HCT116 (cell line): ENCODE measurements at regions of chr1 and their contacts with region 1.

Region 1: DNA sequence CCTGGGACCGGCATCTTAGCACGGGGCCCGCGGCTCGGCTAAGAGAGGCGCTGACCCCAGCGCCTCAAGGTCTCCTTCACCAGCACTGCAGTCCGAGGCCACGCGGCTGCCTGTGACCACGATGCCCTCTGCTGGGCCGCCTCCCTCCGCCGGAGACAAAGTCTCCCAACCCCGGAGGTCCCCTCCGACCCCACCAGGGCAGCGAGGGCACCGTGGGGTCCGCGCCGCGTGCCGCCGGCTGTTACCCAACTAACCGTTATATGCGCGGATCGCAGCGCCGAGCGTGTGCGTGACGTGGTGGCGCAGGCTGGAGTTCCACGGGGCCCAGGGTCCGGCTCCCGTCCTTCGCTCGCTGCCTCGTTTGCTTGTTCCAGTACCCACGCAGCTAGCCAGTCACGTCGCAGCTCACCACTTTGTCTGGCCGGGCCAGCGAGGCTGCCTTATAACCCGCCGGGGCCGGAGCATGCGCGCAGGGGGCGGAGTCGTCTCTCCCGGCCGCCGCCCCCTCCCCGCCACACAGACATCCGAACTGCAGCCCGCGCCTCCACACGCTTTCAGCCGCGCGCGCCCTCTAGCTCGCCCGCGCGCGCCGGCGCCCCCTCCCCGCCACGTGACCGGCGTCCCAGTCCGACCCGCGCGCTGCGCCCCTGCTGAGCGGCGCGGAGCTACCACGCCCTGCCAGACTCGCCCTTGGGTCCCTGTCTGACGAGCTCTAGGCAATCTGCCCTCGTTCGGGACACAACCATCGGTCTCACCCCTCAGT is at the start of gene SLC16A1:
- DNase-seq: peak; percentile 74
- ATAC-seq: peak; percentile 86
- H3K4me3 ChIP-seq: peak within 1 kb of the TSS; percentile 76 to 84
- H3K27ac ChIP-seq: peak within 1 kb of the TSS; percentile 87
- H3K4me1 ChIP-seq: peaks cover 8 to 32% of the 10 kb centered on the region in 2 experiments
- H3K27me3 ChIP-seq: no peaks in the 10 kb centered on the region
- CTCF ChIP-seq: no peak
- POLR2A ChIP-seq: peak; percentile 99
- RAD21 ChIP-seq: peak; percentile 45
- total RNA-seq, gene SLC16A1: 96.7 TPM

Region 2: DNA sequence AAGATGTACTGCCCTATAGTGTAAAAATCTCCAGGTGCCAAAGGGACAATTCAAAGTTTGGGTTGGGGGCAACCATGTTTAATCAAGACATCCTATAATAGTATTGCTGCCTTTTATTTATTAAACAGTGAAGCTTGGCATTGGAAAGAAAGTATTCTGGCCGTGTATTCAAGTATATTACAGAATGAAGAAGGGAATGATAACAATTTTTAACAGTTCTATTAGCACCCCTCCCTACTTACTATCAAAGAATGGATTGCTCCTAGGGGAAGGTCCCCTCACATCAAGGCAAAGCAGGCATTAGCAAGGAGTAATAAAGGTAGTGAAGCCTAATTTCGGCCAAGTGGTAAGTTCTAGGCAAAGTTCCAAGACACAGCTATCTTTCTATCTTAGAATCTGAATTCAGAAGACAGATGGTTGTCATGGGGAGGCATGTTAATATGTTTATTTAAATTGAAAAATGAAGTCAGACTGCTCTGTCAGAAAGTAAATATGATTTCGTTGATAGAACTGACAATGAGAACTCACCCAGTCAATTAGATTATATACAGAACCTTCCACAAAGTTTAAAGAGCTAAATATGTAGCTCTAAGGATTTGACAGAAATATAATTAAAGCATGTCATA is 361.6 kb before region 1 on chr1:
- CTCF ChIA-PET with region 1: no interaction called
- POLR2A ChIA-PET with region 1: no interaction called
- RAD21 ChIA-PET with region 1: no interaction called
- intact Hi-C with region 1: no loop called
- DNase-seq: no peak
- ATAC-seq: no peak
- H3K4me3 ChIP-seq: no peak overlapping the region
- H3K27ac ChIP-seq: no peak overlapping the region
- H3K4me1 ChIP-seq: no peaks in the 10 kb centered on the region
- H3K27me3 ChIP-seq: no peaks in the 10 kb centered on the region
- CTCF ChIP-seq: no peak
- POLR2A ChIP-seq: no peak
- RAD21 ChIP-seq: no peak

Region 3: DNA sequence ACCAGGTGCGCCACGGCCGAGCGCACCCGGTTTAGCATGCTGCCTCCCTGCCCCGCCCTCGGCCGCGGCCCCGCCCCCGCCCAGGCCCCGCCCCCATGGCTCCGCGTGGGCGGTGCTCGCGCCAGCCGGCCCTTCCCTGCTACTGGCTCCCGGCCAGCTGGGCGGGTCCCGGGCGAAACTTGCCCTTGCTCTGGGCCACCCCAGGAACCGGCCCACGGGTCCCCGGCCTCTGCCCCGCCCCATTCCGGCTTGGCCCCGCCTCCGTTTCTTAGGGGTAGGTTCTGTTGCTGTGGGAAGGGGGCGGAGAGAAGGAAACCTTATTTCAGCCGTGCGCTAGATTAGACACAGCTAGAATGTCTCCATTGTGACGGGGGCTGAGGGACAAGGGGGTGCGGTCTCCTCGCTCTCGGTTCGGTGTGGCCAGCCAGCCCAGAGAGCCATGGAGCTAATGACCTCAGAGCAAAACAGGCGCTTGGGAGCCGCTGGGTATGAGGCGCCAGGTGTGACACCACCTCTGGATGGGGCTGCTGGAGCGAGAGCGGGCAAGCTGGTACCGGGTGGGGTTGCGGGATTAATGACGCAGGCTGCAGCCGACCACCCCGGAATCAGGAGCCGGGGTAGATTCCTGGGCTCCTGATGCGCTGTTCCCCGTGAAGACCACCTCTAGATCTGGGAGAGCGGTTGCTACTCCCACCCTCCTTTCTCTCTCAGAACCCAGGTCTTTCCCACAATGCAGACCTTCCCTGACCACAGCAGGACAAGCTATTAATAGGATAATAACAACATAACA is 240.5 kb before region 1 on chr1 and contains the start of gene PPM1J:
- CTCF ChIA-PET with region 1: no interaction called
- POLR2A ChIA-PET with region 1: interaction called, 6 read pairs
- RAD21 ChIA-PET with region 1: no interaction called
- intact Hi-C with region 1: loop called (anchors 5 kb)
- DNase-seq: peak; percentile 89
- ATAC-seq: peak; percentile 82
- H3K4me3 ChIP-seq: peak within 1 kb of the TSS; percentile 58 to 75
- H3K27ac ChIP-seq: peak within 1 kb of the TSS; percentile 34; the same call in 1 of the 2 replicates
- H3K4me1 ChIP-seq: peaks cover 18 to 39% of the 10 kb centered on the region in 2 experiments
- H3K27me3 ChIP-seq: no peaks in the 10 kb centered on the region
- CTCF ChIP-seq: no peak
- POLR2A ChIP-seq: no peak
- RAD21 ChIP-seq: no peak
- total RNA-seq, gene PPM1J: 7.5 TPM

Region 4: GRCh38 chr1:112809253-112809684 is 146.7 kb before region 1 on chr1:
- CTCF ChIA-PET with region 1: interaction called, 3 read pairs
- POLR2A ChIA-PET with region 1: no interaction called
- RAD21 ChIA-PET with region 1: interaction called in 1 of 2 experiments, 3 read pairs
- intact Hi-C with region 1: loop called (anchors 5 kb)
- DNase-seq: peak; percentile 40
- ATAC-seq: peak; percentile 96
- H3K4me3 ChIP-seq: no peak overlapping the region
- H3K27ac ChIP-seq: no peak overlapping the region
- H3K4me1 ChIP-seq: peaks cover 0 to 4% of the 10 kb centered on the region in 2 experiments; a peak in 1 of 4 replicates
- H3K27me3 ChIP-seq: no peaks in the 10 kb centered on the region
- CTCF ChIP-seq: peak; percentile 89 to 97 (median 96)
- POLR2A ChIP-seq: no peak
- RAD21 ChIP-seq: peak; percentile 91

Region 5: DNA sequence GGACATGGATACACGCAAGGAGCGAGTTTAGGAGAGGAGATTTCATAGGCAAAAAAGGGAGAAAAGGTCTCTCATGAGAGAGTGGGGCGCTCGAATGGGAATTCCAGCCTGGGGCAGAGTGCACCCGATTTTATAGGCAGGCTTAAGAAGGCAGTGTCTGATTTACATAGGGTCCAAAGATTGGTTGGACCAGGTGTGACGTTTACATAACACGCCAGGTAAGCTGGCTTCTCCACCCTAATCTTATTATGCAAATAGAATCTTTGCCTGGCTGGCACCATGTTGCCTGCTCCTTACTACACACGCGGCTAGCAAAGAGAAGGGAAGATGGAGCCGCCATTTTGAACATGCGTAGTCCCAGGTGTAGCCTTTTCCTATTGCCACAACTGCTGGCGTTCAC is 103.7 kb before region 1 on chr1:
- CTCF ChIA-PET with region 1: no interaction called
- POLR2A ChIA-PET with region 1: no interaction called
- RAD21 ChIA-PET with region 1: no interaction called
- intact Hi-C with region 1: no loop called
- DNase-seq: no peak
- ATAC-seq: no peak
- H3K4me3 ChIP-seq: no peak overlapping the region
- H3K27ac ChIP-seq: no peak overlapping the region
- H3K4me1 ChIP-seq: peaks cover 0 to 6% of the 10 kb centered on the region in 2 experiments; a peak in 1 of 4 replicates
- H3K27me3 ChIP-seq: no peaks in the 10 kb centered on the region
- CTCF ChIP-seq: no peak
- POLR2A ChIP-seq: no peak
- RAD21 ChIP-seq: no peak

Region 6: DNA sequence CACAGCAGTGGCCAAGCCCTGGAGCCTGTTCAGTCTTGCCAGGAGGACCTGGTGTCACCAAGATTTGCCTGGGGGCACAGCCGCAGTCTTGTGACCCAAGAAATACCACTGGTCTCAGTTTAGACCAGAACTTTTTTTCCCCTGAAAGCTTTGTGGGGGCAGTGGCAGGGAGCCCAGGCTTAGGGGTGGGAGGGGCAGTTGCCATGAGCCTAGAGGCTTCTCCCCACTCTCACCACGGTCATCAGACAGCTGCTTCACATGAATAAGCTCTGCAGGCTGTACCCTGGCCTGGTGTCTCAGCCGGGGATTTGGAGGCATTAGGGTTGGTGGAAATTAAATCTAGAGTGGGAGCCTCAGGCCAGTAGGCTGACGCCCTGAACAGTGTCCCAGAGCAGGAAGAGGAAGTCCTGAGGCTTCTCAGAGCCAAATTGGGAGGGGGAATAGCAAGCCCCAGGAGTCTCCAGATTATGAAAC is 73.7 kb before region 1 on chr1:
- CTCF ChIA-PET with region 1: no interaction called
- POLR2A ChIA-PET with region 1: interaction called, 3 read pairs
- RAD21 ChIA-PET with region 1: no interaction called
- intact Hi-C with region 1: loop called (anchors 1 kb)
- DNase-seq: no peak
- ATAC-seq: no peak
- H3K4me3 ChIP-seq: no peak overlapping the region
- H3K27ac ChIP-seq: no peak overlapping the region
- H3K4me1 ChIP-seq: no peaks in the 10 kb centered on the region
- H3K27me3 ChIP-seq: no peaks in the 10 kb centered on the region
- CTCF ChIP-seq: no peak
- POLR2A ChIP-seq: no peak
- RAD21 ChIP-seq: no peak

Region 7: DNA sequence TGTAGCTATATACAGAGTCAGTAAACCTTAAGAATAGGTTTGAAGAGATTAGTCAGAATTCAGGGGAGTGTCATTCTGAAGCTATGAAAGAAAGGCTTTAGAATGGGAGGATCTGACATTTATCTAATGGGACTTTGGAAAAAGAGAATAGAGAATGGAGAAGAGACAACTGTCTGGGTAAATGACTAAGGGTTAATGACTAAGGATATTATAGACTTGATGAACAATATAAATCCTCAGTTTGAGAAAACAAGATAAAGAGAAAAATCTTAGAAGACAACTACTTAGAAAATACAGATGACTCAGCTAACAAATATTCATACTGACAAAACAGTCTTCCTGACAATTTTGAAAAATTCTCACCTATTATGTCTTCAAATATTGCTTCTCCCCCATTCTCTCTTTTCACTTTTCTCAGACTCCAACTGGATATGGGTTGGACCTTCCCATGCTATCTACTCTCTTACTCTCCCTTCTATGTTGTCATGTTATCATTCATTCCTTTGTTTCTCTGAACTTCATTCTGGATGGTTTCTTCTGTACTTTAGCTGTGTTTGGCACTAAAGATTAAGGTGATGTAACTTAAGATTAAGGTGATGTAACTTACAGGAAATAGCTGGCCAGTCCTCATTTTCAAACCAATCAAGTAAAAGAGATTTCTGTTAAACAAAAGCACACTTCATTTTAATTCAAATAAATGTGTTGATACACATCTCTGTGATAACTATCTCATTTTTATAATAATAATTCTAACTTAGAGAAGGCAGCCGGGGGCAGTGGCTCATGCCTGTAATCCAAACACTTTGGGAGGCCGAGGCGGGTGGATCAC is 20.3 kb before region 1 on chr1:
- CTCF ChIA-PET with region 1: no interaction called
- POLR2A ChIA-PET with region 1: interaction called, 25 read pairs
- RAD21 ChIA-PET with region 1: no interaction called
- intact Hi-C with region 1: no loop called
- DNase-seq: peak; percentile 26
- ATAC-seq: no peak
- H3K4me3 ChIP-seq: no peak overlapping the region
- H3K27ac ChIP-seq: peak overlapping the region; percentile 20; the same call in 1 of the 2 replicates
- H3K4me1 ChIP-seq: peaks cover 23 to 26% of the 10 kb centered on the region in 2 experiments
- H3K27me3 ChIP-seq: no peaks in the 10 kb centered on the region
- CTCF ChIP-seq: no peak
- POLR2A ChIP-seq: no peak
- RAD21 ChIP-seq: no peak

Region 8: DNA sequence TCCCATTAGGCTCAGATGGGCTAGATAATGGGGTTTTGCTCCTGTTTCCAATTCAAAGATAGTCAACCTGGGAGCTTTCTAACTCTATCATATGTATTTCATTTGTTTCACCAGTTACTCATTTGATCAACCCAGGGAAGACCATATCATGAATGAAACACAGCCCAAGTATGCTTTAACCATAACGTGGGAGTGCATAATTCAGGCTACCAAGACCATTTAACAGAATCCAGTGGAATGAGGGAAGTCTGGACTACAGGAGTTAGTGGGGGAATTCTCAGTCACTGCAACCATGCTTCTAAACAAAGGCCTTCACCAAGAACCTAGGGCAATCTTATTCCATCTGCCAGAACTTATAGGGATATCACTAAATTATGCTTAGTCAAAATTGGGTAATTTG is 15.0 kb after region 1 on chr1:
- CTCF ChIA-PET with region 1: no interaction called
- POLR2A ChIA-PET with region 1: interaction called, 13 read pairs
- RAD21 ChIA-PET with region 1: no interaction called
- intact Hi-C with region 1: no loop called
- DNase-seq: no peak
- ATAC-seq: no peak
- H3K4me3 ChIP-seq: no peak overlapping the region
- H3K27ac ChIP-seq: no peak overlapping the region
- H3K4me1 ChIP-seq: no peaks in the 10 kb centered on the region
- H3K27me3 ChIP-seq: no peaks in the 10 kb centered on the region
- CTCF ChIP-seq: no peak
- POLR2A ChIP-seq: no peak
- RAD21 ChIP-seq: no peak

Region 9: GRCh38 chr1:113042285-113043143 is 86.6 kb after region 1 on chr1:
- CTCF ChIA-PET with region 1: no interaction called
- POLR2A ChIA-PET with region 1: interaction called, 13 read pairs
- RAD21 ChIA-PET with region 1: no interaction called
- intact Hi-C with region 1: no loop called
- DNase-seq: peak; percentile 36
- ATAC-seq: peak; percentile 97
- H3K4me3 ChIP-seq: no peak overlapping the region
- H3K27ac ChIP-seq: peak overlapping the region; percentile 2; the same call in 1 of the 2 replicates
- H3K4me1 ChIP-seq: peaks cover 9 to 17% of the 10 kb centered on the region in 2 experiments; a peak in 3 of 4 replicates
- H3K27me3 ChIP-seq: no peaks in the 10 kb centered on the region
- CTCF ChIP-seq: peak; percentile 51 to 88 (median 67); a peak in 5 of 6 replicates
- POLR2A ChIP-seq: no peak
- RAD21 ChIP-seq: peak; percentile 94